HEK293T (cell line): ENCODE measurements at regions of chr14 and their contacts with region 1.

Region 1: DNA sequence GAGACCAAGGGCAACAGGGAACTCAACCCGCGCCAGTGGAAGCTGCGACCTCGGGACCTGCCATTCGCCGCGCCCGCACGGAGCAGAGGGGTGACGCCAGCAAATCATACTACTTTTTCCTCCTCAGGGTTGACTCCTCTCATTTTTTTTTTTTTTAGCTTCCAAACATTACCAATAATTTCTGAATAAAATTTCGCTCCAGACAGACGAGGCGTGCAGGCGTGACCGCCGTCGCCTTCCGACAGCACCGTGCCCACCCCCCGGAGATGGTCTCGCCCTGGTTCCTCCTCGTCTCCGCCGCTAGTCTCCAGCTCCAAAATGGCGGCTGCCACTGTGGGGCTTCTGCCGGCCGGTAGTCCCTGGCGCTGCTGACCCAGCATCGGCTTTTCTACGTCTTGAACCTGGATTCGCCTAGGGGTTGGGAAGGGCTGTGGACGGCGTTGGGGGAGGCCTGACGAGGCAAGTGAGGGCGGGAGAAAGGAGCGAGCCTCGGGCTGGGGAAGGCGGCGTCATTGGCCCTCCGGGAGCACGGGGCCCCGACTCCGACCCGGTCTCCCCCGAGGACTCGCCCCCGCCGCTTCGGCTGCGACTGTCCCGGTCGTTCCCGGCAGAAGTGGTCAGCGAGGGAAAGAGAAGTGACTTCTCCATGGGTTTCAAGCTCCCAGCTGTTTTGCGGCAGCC is at the starts of genes CPSF2 and NDUFB1:
- DNase-seq: peak; percentile 90

Region 2: DNA sequence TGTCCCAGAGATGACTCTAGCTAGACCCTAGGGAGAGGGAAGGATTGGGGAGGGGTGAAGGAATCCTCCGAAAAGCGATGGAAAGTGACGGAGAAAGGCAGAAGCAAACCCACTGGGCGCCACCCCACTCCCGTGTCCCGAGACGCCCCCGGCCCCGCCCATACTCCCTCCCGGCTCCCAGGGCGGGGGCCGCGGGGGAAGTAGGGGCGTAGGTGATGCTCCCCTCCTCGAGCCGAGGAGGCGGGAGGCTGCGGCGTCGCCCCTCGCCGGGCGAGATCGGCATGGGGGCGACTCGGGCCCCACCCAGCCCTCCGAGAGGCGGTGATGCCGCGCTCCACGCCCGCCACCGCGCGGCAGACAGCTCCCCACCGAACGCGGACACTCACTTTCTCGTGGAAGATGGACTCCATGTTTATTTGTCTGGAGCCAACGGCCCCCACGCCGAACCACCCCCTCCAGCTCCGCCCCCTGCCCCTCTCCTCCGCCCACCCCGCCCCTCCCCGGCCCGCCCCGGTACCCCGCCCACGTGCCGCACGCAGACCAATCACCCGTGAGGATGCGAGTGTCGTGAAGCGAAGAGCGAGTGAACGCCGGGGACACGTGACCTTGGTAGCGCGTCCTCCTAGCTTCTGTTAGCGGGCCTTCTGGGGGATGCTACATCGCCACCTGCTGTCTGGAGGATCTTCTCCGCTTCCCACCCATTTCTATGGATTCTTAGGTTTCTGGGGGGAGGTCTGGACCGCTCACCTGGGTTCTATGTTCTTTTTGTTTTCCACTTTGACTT is 15.5 kb before region 1 on chr14 and contains the start of gene ATXN3:
- CTCF ChIA-PET with region 1: interaction called, 31 read pairs
- POLR2A ChIA-PET with region 1: interaction called, 77 read pairs
- DNase-seq: peak; percentile 97

Region 3: DNA sequence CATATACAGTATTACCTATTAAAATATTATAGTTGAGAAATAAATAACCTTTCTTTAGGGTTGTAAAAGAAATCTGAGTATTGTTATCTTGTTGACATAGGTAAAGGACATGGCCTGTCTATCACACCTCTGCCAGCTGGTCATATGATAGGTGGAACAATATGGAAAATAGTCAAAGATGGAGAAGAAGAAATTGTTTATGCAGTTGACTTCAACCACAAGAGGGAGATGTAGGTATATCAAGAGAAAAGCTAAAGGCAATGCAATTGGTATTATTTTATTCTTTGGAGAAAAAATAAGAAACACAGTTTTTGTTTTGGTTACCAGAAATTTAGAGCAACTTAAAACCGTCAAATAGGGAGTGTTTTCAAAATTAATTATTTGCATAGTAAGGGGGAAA is 13.5 kb after region 1 on chr14:
- CTCF ChIA-PET with region 1: interaction called, 3 read pairs
- POLR2A ChIA-PET with region 1: interaction called, 38 read pairs
- DNase-seq: no peak